OCI-LY7 (cell line): ENCODE measurements at regions of chr6 and their contacts with region 1.

Region 1: GRCh38 chr6:26473758-26474438 is 16.1 kb downstream of the BTN2A1 start:
- DNase-seq: peak; percentile 95
- H3K4me3 ChIP-seq: peak overlapping the region; percentile 73
- H3K27ac ChIP-seq: peak overlapping the region; percentile 96
- H3K4me1 ChIP-seq: peaks cover 55% of the 10 kb centered on the region
- CTCF ChIP-seq: no peak

Region 2: GRCh38 chr6:26363882-26364701 is 109.8 kb before region 1 on chr6:
- CTCF ChIA-PET with region 1: no interaction called
- POLR2A ChIA-PET with region 1: no interaction called
- intact Hi-C with region 1: loop called (anchors 5 kb)
- DNase-seq: peak; percentile 52
- H3K4me3 ChIP-seq: peak overlapping the region; percentile 77
- H3K27ac ChIP-seq: peak overlapping the region; percentile 96
- H3K4me1 ChIP-seq: peaks cover 70% of the 10 kb centered on the region
- CTCF ChIP-seq: no peak

Region 3: DNA sequence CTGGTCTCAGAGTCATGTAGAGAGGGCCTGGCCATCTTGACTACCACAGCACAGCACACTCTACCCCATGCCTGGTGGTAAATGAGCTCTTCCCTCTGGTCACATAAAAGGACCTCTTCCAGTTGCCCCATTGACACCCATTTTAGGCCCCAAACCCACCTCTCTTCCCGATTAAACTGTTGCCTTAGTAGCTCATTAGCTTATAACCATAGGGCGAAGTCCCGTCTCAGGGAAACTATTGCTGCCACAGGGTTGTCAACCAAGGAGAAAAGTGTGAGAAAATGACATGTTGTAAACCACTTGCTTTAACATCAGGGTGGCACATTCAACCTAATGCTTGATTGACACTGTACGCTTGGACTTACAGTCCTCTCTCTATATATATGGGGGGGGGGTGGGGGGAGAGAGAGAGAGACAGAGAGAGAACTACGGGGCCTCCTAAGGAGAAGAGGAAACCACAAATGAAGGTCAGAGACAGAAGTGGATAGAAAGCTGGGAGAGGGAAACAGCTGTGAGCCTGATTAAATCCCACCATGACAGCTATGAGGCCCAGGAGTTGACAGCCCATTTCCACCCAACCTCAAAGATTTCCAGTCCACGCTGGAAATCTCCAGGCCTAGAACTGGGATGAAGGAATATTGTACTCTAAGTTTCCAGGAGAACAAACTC is 11.3 kb after region 1 on chr6:
- CTCF ChIA-PET with region 1: no interaction called
- POLR2A ChIA-PET with region 1: interaction called, 14 read pairs
- intact Hi-C with region 1: no loop called
- DNase-seq: no peak
- H3K4me3 ChIP-seq: no peak overlapping the region
- H3K27ac ChIP-seq: no peak overlapping the region
- H3K4me1 ChIP-seq: peaks cover 12% of the 10 kb centered on the region
- CTCF ChIP-seq: no peak

Region 4: DNA sequence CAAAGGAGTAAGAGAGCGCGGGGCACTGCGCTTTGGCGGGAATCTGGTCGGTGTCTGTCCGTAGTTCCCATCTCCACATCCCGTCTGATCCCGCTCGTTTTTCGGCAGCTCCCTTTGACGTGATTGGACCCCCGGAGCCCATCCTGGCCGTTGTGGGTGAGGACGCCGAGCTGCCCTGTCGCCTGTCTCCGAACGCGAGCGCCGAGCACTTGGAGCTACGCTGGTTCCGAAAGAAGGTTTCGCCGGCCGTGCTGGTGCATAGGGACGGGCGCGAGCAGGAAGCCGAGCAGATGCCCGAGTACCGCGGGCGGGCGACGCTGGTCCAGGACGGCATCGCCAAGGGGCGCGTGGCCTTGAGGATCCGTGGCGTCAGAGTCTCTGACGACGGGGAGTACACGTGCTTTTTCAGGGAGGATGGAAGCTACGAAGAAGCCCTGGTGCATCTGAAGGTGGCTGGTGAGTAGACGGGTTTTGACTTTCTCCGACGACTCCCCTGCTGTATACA is 27.6 kb after region 1 on chr6:
- CTCF ChIA-PET with region 1: no interaction called
- POLR2A ChIA-PET with region 1: interaction called, 27 read pairs
- intact Hi-C with region 1: no loop called
- DNase-seq: no peak
- H3K4me3 ChIP-seq: peak overlapping the region; percentile 53
- H3K27ac ChIP-seq: peak overlapping the region; percentile 98
- H3K4me1 ChIP-seq: peaks cover 68% of the 10 kb centered on the region
- CTCF ChIP-seq: no peak

Region 5: GRCh38 chr6:26532699-26533531 is 59.0 kb after region 1 on chr6:
- CTCF ChIA-PET with region 1: no interaction called
- POLR2A ChIA-PET with region 1: interaction called, 13 read pairs
- intact Hi-C with region 1: loop called (anchors 2 kb)
- DNase-seq: peak; percentile 90
- H3K4me3 ChIP-seq: peak overlapping the region; percentile 69
- H3K27ac ChIP-seq: peak overlapping the region; percentile 93
- H3K4me1 ChIP-seq: peaks cover 47% of the 10 kb centered on the region
- CTCF ChIP-seq: no peak